ENCODE measurements at regions of chr12 and their contacts with region 1.

Region 1: DNA sequence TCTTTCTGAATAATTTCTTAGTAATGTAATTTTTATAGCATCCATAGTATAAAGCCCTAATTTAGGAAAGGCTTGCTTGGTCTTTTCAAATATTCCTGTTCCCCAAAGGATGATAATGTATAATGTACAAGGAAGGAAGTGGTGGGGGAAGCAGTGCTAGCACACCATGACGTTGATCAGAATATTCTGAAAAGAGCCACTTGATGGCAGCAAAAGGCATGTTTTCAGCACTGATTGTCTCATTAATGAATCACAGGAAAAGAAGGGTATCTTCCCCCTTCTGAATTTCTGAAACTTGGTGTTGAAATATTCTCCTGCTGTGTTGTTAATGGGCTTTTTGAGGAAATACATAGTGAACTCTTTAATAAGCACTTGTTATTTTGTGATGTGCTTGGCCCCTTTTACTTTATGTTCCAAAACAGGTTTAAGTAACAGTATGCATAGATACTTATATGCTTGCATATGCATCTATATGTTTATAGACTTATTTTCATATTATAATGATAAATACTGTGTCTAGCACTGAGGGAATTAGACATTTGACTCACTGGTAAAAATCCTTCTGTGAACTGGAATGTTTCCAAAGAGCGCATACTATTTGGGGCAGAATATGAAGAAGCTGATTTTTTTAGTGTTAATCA is 122.0 kb downstream of the TMEM117 start:
- DNase-seq: peak; percentile 19
- H3K4me3 ChIP-seq: no peak overlapping the region
- CTCF ChIP-seq: peak; percentile 48

Region 2: GRCh38 chr12:43930032-43930431 is 27.8 kb before region 1 on chr12:
- CTCF ChIA-PET with region 1: no interaction called
- POLR2A ChIA-PET with region 1: no interaction called
- DNase-seq: no peak
- H3K4me3 ChIP-seq: no peak overlapping the region
- CTCF ChIP-seq: no peak

Region 3: DNA sequence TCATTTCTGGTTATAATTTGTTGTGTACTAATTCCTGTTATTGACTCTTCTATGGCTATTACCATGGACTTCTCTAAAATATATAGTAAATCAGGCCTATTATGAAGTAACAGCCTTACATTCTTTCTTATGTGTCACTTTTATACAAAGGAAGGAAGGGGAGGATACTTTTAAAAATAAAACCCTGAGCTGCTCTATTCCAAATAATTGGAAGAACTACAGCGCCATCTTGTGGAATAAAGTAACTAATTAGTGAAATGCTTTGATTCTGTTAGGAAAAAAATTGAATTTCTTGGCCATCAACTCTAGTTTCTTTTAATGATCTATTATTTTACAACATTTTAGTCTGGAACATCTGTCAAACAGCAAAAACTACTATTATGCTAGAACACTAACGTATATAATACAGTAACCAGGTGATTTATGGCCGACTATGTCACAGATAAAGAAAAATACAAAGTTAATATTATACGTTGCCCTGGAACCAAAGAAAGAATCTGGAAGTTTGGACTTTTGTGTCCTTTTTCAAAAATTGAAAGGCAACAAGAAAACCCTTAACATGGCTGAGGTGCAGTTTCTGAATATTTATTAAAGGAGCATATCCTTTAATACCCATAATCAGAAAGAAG is 973.2 kb after region 1 on chr12:
- CTCF ChIA-PET with region 1: interaction called, 10 read pairs
- POLR2A ChIA-PET with region 1: no interaction called
- DNase-seq: peak; percentile 26
- H3K4me3 ChIP-seq: no peak overlapping the region
- CTCF ChIP-seq: no peak